PC-3 (cell line): ENCODE measurements at regions of chr7 and their contacts with region 1.

Region 1: DNA sequence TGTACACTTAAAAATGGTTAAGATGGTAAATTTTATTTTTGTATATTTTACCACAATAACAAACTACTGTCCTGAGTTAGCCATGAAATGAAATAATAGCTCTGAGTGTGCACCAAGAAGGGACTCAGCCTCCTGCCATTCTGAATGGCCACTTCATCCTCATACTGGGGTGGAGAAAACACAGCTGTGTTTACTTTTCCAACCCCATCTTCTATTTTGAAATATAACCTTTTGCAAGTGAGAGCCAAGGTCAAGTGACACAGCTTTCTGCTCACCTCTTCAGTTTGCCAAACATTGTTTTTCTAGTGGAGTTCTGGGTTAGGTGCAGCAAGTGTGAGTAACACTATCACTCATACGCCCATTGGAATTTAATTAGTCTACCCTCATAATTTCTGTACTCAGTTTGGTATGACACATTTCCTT is 107.4 kb upstream of the GLCCI1 start:
- DNase-seq: peak; percentile 86
- ATAC-seq: peak; percentile 97
- H3K4me3 ChIP-seq: no peak overlapping the region
- H3K27ac ChIP-seq: peak overlapping the region; percentile 42
- H3K4me1 ChIP-seq: peaks cover 27% of the 10 kb centered on the region
- H3K27me3 ChIP-seq: no peaks in the 10 kb centered on the region
- CTCF ChIP-seq: no peak

Region 2: DNA sequence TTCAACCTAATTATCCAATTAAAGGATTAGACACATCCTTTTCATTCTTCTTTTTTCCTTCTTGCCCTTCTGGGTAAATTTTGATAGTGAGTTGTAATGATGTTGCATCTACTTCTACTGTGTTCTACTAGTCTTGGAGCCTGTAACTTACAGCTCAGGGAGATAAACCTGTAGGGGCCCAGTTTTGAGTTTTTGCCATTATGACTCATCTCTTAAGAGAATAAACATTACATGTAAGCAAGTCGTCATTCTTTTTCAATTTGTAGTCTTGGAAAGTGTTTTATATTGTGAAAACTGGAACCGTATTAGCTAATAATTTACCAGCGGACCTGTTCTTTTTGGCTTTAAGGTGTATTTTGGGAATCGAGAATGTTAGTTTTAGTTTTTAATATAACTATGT is 53.1 kb before region 1 on chr7:
- CTCF ChIA-PET with region 1: no interaction called
- POLR2A ChIA-PET with region 1: no interaction called
- intact Hi-C with region 1: loop called (anchors 5 kb)
- DNase-seq: peak; percentile 88
- ATAC-seq: peak; percentile 94
- H3K4me3 ChIP-seq: no peak overlapping the region; the same call in 1 of the 2 replicates
- H3K27ac ChIP-seq: no peak overlapping the region
- H3K4me1 ChIP-seq: peaks cover 15% of the 10 kb centered on the region
- H3K27me3 ChIP-seq: no peaks in the 10 kb centered on the region
- CTCF ChIP-seq: no peak

Region 3: GRCh38 chr7:7834761-7835160 is 26.5 kb before region 1 on chr7:
- CTCF ChIA-PET with region 1: no interaction called
- POLR2A ChIA-PET with region 1: no interaction called
- intact Hi-C with region 1: no loop called
- DNase-seq: no peak
- ATAC-seq: no peak
- H3K4me3 ChIP-seq: no peak overlapping the region
- H3K27ac ChIP-seq: no peak overlapping the region
- H3K4me1 ChIP-seq: peaks cover 8% of the 10 kb centered on the region
- H3K27me3 ChIP-seq: no peaks in the 10 kb centered on the region
- CTCF ChIP-seq: no peak

Region 4: DNA sequence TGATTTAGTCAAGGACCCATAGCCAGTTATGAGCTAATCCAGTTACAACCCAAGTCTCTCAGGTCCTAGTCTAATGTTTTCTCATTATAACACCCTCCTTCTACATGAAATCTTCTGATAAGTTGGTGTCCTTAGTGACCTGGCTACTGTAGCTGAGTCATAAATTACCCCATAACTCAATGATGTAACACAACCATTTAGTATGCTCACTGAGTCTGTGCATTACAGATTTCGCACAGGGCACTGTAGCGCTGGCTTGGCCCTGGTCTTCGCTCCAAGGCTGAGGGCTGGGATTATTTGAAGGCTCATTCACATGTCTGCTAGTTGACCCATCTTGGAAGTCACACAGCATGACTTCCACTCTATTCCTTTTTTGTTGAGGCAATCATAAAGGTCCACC is 71.4 kb after region 1 on chr7:
- CTCF ChIA-PET with region 1: no interaction called
- POLR2A ChIA-PET with region 1: no interaction called
- intact Hi-C with region 1: no loop called
- DNase-seq: no peak
- ATAC-seq: no peak
- H3K4me3 ChIP-seq: no peak overlapping the region
- H3K27ac ChIP-seq: no peak overlapping the region
- H3K4me1 ChIP-seq: no peaks in the 10 kb centered on the region
- H3K27me3 ChIP-seq: no peaks in the 10 kb centered on the region
- CTCF ChIP-seq: no peak

Region 5: DNA sequence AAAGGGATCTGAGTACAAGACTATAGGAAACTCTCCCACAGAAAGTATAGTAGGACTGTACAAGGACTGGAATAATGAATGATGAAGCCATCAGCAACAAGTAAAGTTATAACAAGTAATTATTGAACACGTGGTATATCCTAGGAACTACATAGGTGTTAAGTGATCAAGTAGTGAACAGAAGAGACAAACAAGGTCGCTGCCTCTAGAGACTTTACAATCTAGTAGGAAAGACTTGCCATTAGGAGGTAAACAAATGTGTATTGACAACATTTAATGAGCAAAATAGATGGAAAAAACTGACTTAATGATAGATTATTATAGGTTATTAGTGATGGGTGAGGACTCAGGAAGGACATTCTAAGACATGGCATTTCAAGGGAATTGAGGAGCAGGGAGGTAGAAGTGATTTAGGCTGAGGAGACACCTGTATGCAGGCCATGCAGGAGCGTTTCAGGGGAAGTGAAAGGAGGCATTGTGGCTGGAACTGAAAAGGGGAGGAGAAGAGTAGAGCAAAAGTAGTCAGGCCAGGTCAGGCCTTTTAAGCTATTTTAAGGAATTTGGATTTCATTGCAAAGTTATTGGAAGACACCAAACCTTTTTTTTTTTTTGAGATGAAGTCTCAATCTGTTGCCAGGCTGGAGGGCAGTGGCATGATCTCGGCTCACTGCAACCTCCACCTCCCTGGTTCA is 98.9 kb after region 1 on chr7:
- CTCF ChIA-PET with region 1: no interaction called
- POLR2A ChIA-PET with region 1: no interaction called
- intact Hi-C with region 1: loop called (anchors 1 kb)
- DNase-seq: no peak
- ATAC-seq: no peak
- H3K4me3 ChIP-seq: no peak overlapping the region
- H3K27ac ChIP-seq: no peak overlapping the region
- H3K4me1 ChIP-seq: peaks cover 30% of the 10 kb centered on the region
- H3K27me3 ChIP-seq: no peaks in the 10 kb centered on the region
- CTCF ChIP-seq: no peak

Region 6: DNA sequence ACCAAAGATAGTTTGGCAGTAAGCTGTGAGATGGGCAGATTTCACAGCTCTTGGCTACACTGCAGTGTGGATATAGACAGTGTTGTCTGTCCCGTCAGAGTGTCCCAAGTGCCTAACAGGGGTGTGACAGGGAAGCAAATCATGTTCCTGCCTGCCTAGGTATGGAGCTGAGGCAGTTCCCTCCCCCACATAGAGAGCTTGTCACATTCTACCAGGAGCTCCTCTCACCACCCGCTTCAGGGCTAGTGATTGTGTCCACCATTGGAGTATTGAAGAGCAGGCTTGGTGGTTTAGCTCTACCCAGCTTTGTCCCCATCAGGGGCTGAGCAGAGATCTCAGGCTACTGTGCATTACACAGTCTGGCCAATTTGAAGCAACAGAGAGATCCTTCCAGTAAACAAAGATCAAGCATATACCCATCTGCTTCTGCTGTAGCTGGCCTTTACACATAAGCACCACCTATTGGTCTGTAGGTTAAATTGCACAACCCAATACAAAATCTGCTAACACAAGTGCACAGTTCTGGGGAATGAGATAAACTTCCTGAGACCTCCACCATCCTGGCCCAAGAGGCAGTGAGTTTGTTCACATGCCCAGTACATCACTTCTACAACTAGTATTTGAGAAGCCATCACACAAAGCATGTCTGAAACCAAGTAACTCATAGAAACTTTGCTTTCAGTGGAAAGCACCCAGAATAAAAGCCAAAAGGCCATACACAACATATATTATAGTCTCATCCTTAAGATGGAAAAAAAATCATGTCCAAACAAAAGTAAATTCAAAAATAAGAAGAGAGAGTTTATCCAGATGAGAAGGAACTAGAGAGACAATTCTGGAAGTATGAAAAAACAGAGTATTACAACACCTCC is 174.7 kb after region 1 on chr7:
- CTCF ChIA-PET with region 1: no interaction called
- POLR2A ChIA-PET with region 1: no interaction called
- intact Hi-C with region 1: no loop called
- DNase-seq: peak; percentile 41
- ATAC-seq: peak; percentile 95
- H3K4me3 ChIP-seq: no peak overlapping the region
- H3K27ac ChIP-seq: no peak overlapping the region
- H3K4me1 ChIP-seq: 0 out of 2 replicates have a peak, but pooled peaks cover 8% of the 10 kb centered on the region
- H3K27me3 ChIP-seq: no peaks in the 10 kb centered on the region
- CTCF ChIP-seq: peak; percentile 74

Region 7: GRCh38 chr7:8125680-8126444 is 264.6 kb after region 1 on chr7:
- CTCF ChIA-PET with region 1: no interaction called
- POLR2A ChIA-PET with region 1: no interaction called
- intact Hi-C with region 1: no loop called
- DNase-seq: no peak
- ATAC-seq: no peak
- H3K4me3 ChIP-seq: no peak overlapping the region
- H3K27ac ChIP-seq: no peak overlapping the region
- H3K4me1 ChIP-seq: no peaks in the 10 kb centered on the region
- H3K27me3 ChIP-seq: no peaks in the 10 kb centered on the region
- CTCF ChIP-seq: no peak